Activated CD8-positive, alpha-beta T cell treated with anti-CD3 and anti-CD28 coated beads for 36 hours (primary cell): ENCODE measurements at regions of chr5 and their contacts with region 1.

Region 1: GRCh38 chr5:102583276-102584124 is 84.7 kb upstream of the SLCO6A1 start:
- DNase-seq: no peak
- ATAC-seq: no peak
- H3K4me3 Mint-ChIP-seq: no peak overlapping the region
- H3K27ac Mint-ChIP-seq: no peak overlapping the region
- H3K4me1 Mint-ChIP-seq: no peaks in the 10 kb centered on the region
- H3K27me3 Mint-ChIP-seq: no peaks in the 10 kb centered on the region
- CTCF ChIP-seq: peak; percentile 69

Region 2: GRCh38 chr5:103041071-103041676 is 457.7 kb after region 1 on chr5:
- CTCF ChIA-PET with region 1: no interaction called
- POLR2A ChIA-PET with region 1: no interaction called
- intact Hi-C with region 1: loop called (anchors 5 kb)
- DNase-seq: no peak
- ATAC-seq: no peak
- H3K4me3 Mint-ChIP-seq: no peak overlapping the region
- H3K27ac Mint-ChIP-seq: no peak overlapping the region
- H3K4me1 Mint-ChIP-seq: no peaks in the 10 kb centered on the region
- H3K27me3 Mint-ChIP-seq: peaks cover under 1% of the 10 kb centered on the region
- CTCF ChIP-seq: peak; percentile 52